Panc1 (cell line): ENCODE measurements at regions of chr9 and their contacts with region 1.

Region 1: GRCh38 chr9:88534456-88535261 is at the start of gene NXNL2:
- DNase-seq: no peak
- ATAC-seq: peak; percentile 83
- H3K4me3 ChIP-seq: peak within 1 kb of the TSS; percentile 74 to 82
- H3K27ac ChIP-seq: peak within 1 kb of the TSS; percentile 97
- H3K4me1 ChIP-seq: peaks cover 23% of the 10 kb centered on the region
- H3K27me3 ChIP-seq: no peaks in the 10 kb centered on the region
- CTCF ChIP-seq: no peak
- total RNA-seq, gene NXNL2: 1.4 TPM

Region 2: DNA sequence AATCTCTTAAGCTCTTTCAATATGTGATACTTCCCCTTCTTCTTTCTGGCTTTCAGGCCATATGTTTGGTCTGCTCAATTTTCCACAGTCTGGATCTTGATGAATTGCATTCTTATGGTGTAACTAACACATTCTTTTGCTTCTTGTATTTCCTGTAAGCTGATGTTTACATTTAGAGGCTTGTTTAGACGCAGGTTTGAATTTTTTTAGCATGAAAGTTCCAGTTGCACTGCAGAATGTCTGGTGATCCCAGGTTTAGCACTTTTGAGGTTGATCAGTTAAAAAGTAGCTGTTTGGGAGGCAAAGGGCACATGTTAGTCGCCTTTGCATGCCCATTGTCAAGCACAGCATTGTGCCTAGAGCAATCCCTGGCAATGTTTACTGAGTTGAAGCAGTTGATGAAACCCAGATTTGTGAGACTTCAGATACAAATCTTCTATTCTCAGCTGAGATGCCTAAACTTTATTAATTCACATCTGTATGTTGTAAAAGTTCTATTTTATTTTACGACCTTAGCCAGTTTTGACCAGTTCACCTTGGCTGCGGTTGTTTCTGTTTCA is 336.8 kb before region 1 on chr9:
- CTCF ChIA-PET with region 1: no interaction called
- POLR2A ChIA-PET with region 1: no interaction called
- in situ Hi-C with region 1: no loop called
- intact Hi-C with region 1: loop called (anchors 5 kb)
- DNase-seq: peak; percentile 51
- ATAC-seq: peak; percentile 94
- H3K4me3 ChIP-seq: peak overlapping the region; percentile 7 to 42; a peak in 2 of 4 replicates
- H3K27ac ChIP-seq: peak overlapping the region; percentile 97
- H3K4me1 ChIP-seq: peaks cover 21% of the 10 kb centered on the region
- H3K27me3 ChIP-seq: no peaks in the 10 kb centered on the region
- CTCF ChIP-seq: no peak

Region 3: DNA sequence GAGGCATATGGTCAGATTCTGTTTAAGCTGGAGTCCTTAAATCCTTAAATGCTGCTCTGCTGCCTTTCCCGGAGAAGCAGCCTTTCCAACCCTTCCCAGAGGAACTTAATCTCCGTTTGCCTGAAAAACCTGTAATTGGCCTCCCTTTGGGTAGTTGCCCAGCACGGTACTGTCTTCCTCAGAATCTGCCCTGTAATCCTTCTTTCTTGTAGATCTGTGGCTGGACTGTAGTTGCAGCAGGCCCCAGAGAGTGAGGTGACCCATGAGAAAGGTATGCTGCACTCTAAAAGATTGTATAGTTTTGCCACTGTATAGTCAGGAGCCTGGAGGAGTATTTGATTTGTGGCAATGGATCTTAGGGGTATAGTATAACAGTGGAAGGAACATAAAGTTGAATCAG is 134.7 kb before region 1 on chr9:
- CTCF ChIA-PET with region 1: no interaction called
- POLR2A ChIA-PET with region 1: interaction called, 10 read pairs
- in situ Hi-C with region 1: no loop called
- intact Hi-C with region 1: no loop called
- DNase-seq: no peak
- ATAC-seq: peak; percentile 82
- H3K4me3 ChIP-seq: no peak overlapping the region
- H3K27ac ChIP-seq: peak overlapping the region; percentile 59
- H3K4me1 ChIP-seq: peaks cover 15% of the 10 kb centered on the region
- H3K27me3 ChIP-seq: no peaks in the 10 kb centered on the region
- CTCF ChIP-seq: no peak

Region 4: GRCh38 chr9:88435336-88435735 is 99.3 kb before region 1 on chr9:
- CTCF ChIA-PET with region 1: no interaction called
- POLR2A ChIA-PET with region 1: interaction called, 10 read pairs
- in situ Hi-C with region 1: no loop called
- intact Hi-C with region 1: no loop called
- DNase-seq: no peak
- ATAC-seq: no peak
- H3K4me3 ChIP-seq: no peak overlapping the region
- H3K27ac ChIP-seq: no peak overlapping the region
- H3K4me1 ChIP-seq: no peaks in the 10 kb centered on the region
- H3K27me3 ChIP-seq: no peaks in the 10 kb centered on the region
- CTCF ChIP-seq: no peak

Region 5: DNA sequence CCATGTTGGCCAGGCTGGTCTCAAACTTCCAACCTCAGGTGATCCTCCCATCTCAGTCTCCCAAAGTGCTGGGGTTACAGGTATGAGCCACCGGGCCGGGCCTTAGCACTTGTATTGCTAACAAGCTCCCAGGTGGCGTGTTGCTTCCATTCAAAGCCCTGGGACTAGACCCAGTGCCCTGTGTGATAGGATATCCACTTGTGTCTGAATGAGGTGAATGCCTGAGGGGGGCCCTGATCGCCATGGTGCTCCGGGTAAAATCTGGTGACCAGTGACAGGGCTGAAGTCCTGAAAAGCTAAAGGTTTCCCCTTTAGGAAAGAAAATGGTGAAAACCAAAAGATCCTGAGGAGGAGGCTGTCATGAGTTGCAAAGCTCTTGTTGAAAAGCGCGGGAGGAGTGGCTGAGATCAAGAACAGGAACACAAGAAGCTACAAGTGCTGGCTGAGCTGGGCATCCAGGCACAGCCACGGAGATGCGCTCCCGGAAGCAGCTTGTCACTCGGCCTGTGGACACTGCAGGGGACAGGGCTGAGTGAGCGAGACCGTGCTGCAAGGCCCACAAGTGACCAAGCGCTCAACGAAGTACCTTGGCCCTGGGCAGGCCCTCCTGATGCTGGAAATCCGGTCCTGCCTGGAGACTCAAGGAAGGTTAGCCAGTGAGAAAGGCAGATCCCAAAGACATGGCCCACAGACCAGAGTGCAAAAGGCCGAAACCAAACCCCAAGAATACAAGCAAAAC is 39.5 kb before region 1 on chr9:
- CTCF ChIA-PET with region 1: no interaction called
- POLR2A ChIA-PET with region 1: interaction called, 18 read pairs
- in situ Hi-C with region 1: no loop called
- intact Hi-C with region 1: no loop called
- DNase-seq: no peak
- ATAC-seq: no peak
- H3K4me3 ChIP-seq: no peak overlapping the region
- H3K27ac ChIP-seq: no peak overlapping the region
- H3K4me1 ChIP-seq: no peaks in the 10 kb centered on the region
- H3K27me3 ChIP-seq: no peaks in the 10 kb centered on the region
- CTCF ChIP-seq: no peak

Region 6: DNA sequence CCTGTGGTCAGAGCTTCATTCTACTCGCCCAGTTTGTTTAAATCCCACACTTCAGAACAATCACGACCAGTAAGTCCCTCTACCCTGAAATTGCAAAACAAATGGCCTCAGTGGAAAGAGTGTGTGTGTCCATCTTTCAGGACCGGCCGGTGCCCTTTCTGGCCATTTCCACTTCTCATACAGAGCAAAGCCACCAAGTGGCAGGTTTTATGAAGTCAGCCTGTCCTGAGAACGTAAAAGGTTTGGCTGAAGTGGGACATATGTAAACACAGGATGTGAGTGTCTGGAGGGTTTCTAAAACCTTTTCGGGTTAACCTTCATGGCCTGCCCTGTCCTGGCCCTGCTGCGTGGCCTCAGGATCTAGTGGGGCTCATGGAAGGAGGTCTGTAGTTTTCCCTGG is 25.0 kb after region 1 on chr9:
- CTCF ChIA-PET with region 1: no interaction called
- POLR2A ChIA-PET with region 1: interaction called, 12 read pairs
- in situ Hi-C with region 1: no loop called
- intact Hi-C with region 1: no loop called
- DNase-seq: no peak
- ATAC-seq: no peak
- H3K4me3 ChIP-seq: no peak overlapping the region
- H3K27ac ChIP-seq: no peak overlapping the region
- H3K4me1 ChIP-seq: no peaks in the 10 kb centered on the region
- H3K27me3 ChIP-seq: no peaks in the 10 kb centered on the region
- CTCF ChIP-seq: no peak

Region 7: DNA sequence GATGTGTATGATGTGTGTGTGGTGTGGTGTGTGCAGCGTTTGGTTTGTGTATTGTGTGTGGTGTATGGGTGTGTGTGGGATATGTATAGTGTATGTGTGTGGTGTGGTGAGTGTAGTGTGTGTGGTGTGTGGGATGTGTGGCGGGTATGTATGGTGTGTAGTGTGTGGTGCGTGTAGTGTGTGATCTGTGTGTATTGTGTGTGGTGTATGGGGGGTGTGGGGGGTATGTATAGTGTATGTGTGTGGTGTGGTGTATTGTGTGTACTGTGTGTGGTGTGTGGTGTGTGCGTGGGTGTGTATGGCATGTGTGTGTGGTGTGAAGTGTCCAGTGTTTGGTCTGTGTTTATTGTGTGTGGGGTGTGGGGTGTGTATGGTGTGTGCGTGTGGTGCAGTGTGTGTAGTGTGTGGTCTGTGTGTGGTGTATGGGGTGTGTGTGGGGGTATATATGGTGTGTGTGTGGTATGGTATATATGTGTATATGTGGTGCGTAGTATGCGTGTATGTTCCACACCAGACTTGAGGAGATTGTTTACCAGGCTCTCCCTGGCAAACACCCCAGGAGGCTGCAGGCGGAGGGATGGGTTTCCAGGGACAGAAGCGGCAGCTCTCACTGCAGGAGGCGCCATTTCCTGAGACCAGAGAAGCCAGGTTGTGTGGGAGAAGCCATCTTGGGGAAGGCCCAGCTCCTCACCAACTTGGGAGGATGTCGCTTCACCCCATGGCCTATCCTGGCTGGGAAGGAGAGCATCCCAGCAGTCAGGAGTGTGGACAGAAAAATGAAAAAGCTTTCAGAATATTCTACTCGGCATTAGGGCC is 138.4 kb after region 1 on chr9:
- CTCF ChIA-PET with region 1: no interaction called
- POLR2A ChIA-PET with region 1: no interaction called
- in situ Hi-C with region 1: no loop called
- intact Hi-C with region 1: no loop called
- DNase-seq: no peak
- ATAC-seq: no peak; the same call in 1 of the 2 replicates
- H3K4me3 ChIP-seq: no peak overlapping the region
- H3K27ac ChIP-seq: no peak overlapping the region
- H3K4me1 ChIP-seq: no peaks in the 10 kb centered on the region
- H3K27me3 ChIP-seq: no peaks in the 10 kb centered on the region
- CTCF ChIP-seq: no peak